ENCODE measurements at regions of chr10 and their contacts with region 1.

Region 1: GRCh38 chr10:62528441-62528840 is 154.3 kb downstream of the ZNF365 start:
- DNase-seq: peak; percentile 79
- ATAC-seq: peak; percentile 91
- H3K4me3 ChIP-seq: no peak overlapping the region
- H3K27ac ChIP-seq: peak overlapping the region; percentile 91
- H3K4me1 ChIP-seq: peaks cover 32% of the 10 kb centered on the region
- H3K27me3 ChIP-seq: no peaks in the 10 kb centered on the region
- CTCF ChIP-seq: no peak
- EP300 ChIP-seq: peak; percentile 81 to 89
- POLR2A ChIP-seq: no peak
- RAD21 ChIP-seq: peak; percentile 23; the same call in 1 of the 2 replicates

Region 2: DNA sequence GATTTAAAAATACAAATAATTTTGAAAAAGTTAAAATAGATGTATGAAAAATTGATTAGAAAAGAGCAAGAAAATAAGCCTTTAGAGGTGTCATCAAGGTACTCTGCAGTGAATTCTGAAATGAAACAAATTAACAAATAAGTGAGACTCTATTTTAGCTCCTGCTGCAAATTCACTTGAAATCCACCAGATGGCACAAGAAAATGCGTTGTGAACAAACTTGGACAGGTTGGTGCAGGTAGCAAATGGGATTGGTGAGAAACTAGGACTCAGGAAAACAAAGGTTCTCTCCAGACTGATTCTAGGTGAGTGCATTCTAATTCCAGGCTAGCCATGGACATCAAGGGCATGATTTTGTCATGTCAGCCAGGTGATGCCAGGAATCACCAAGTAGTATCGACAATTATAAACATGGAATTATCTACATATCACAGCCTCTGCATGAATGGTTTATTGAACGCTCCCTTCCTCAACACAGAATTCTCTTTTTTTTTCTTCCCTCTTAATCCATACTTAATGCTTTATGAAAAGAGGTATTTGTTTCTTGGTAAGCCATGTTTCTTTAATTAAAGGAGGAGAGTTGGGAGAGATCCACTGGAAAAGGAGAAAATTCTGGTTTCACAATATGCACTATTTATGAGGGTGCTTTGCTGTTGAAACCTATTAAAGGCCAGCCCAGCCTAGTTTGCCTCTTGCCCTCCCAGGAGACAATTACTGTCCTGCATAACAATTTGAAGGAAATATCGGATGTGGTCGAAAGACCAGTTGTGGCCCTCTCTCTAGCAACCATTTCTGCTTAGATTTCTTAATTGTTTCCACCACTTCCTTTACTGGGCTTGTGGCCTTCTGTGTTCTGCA is 36.2 kb before region 1 on chr10:
- CTCF ChIA-PET with region 1: interaction called, 7 read pairs
- POLR2A ChIA-PET with region 1: no interaction called
- RAD21 ChIA-PET with region 1: interaction called, 44 read pairs
- SMC1A ChIA-PET with region 1: interaction called, 33 read pairs
- in situ Hi-C with region 1: no loop called
- intact Hi-C with region 1: loop called (anchors 1 kb)
- DNase-seq: peak; percentile 25
- ATAC-seq: peak; percentile 75
- H3K4me3 ChIP-seq: no peak overlapping the region
- H3K27ac ChIP-seq: no peak overlapping the region
- H3K4me1 ChIP-seq: no peaks in the 10 kb centered on the region
- H3K27me3 ChIP-seq: no peaks in the 10 kb centered on the region; a peak in 1 of 4 replicates
- CTCF ChIP-seq: peak; percentile 56 to 71 (median 71); a peak in 5 of 6 replicates
- EP300 ChIP-seq: no peak
- POLR2A ChIP-seq: no peak
- RAD21 ChIP-seq: peak; percentile 94

Region 3: DNA sequence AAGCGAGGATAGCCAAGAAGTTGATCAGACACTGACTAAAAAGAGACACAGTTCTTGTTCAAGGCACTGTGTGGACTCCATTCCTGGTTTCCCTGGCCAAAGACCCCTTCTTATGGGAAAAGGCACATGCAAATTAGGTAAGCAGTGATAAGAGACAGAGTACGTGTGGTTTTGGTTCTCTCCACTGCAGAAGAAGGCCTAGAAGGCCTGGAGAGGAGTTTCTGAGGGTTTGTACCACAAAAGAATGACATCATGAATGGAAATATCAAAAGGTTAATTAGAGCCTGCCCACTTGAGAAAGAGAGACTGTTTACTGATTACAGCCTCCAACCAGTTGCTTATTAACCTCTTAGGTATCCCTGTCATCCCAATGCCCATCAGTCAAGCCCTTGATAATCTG is 16.8 kb before region 1 on chr10:
- CTCF ChIA-PET with region 1: interaction called, 7 read pairs
- POLR2A ChIA-PET with region 1: interaction called, 5 read pairs
- RAD21 ChIA-PET with region 1: interaction called, 12 read pairs
- SMC1A ChIA-PET with region 1: interaction called, 22 read pairs
- in situ Hi-C with region 1: no loop called
- intact Hi-C with region 1: loop called (anchors 1 kb)
- DNase-seq: peak; percentile 23
- ATAC-seq: peak; percentile 95
- H3K4me3 ChIP-seq: no peak overlapping the region
- H3K27ac ChIP-seq: no peak overlapping the region
- H3K4me1 ChIP-seq: no peaks in the 10 kb centered on the region
- H3K27me3 ChIP-seq: no peaks in the 10 kb centered on the region
- CTCF ChIP-seq: no peak
- EP300 ChIP-seq: peak; percentile 31 to 56; a peak in 2 of 4 replicates
- POLR2A ChIP-seq: no peak
- RAD21 ChIP-seq: no peak

Region 4: DNA sequence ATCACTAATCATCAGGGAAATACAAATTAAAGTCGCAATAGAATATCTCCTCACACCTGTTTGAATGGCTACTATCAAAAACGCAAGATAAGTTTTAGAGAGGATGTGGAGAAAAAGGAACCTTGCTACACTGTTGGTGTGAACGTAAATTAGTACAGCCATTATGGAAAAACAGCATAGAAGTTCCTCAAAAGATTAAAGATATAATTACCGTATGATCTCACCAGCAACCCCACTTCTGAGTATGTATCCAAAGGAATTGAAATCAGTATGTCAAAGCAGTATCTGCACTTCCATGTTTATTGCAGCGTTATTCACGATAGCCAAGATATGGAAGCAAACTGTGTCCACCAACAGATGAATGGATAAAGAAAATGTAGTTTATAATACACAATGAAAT is 10.2 kb after region 1 on chr10:
- CTCF ChIA-PET with region 1: interaction called, 6 read pairs
- POLR2A ChIA-PET with region 1: interaction called, 7 read pairs
- RAD21 ChIA-PET with region 1: interaction called, 30 read pairs
- SMC1A ChIA-PET with region 1: interaction called, 72 read pairs
- in situ Hi-C with region 1: no loop called
- intact Hi-C with region 1: no loop called
- DNase-seq: no peak
- ATAC-seq: no peak
- H3K4me3 ChIP-seq: no peak overlapping the region
- H3K27ac ChIP-seq: no peak overlapping the region
- H3K4me1 ChIP-seq: peaks cover 10% of the 10 kb centered on the region; the same call in 1 of the 2 replicates
- H3K27me3 ChIP-seq: no peaks in the 10 kb centered on the region
- CTCF ChIP-seq: no peak
- EP300 ChIP-seq: no peak
- POLR2A ChIP-seq: no peak
- RAD21 ChIP-seq: no peak

Region 5: DNA sequence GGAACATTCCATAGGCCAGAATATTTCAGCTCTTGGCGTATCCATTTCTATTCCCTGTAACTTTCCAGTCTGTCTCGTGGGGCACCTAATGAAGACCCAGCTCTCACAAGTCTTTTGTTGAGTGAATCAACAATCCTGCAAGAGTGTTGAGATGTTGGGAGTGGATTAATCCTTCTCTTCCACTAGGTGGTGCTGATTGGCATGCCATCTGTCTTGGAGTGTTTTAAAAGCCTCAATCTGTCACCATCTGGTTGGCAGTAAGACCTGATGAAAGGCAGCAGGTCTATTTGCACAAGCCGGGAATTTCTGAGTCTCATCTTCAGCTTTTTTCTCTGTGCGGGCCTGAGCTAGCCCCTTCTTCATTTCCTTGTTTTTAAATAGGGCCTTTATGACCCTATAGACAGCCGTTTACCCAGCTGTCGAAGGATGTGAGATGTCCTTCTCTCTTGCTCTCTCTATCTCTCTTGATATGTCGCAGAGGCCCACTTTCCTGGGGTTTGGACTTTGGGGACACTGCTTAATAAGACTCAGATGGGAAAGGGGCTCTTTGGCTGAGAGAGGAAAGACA is 26.3 kb after region 1 on chr10:
- CTCF ChIA-PET with region 1: interaction called, 26 read pairs
- POLR2A ChIA-PET with region 1: no interaction called
- RAD21 ChIA-PET with region 1: interaction called, 8 read pairs
- SMC1A ChIA-PET with region 1: interaction called, 15 read pairs
- in situ Hi-C with region 1: no loop called
- intact Hi-C with region 1: loop called (anchors 2 kb)
- DNase-seq: no peak
- ATAC-seq: peak; percentile 93
- H3K4me3 ChIP-seq: no peak overlapping the region
- H3K27ac ChIP-seq: no peak overlapping the region
- H3K4me1 ChIP-seq: no peaks in the 10 kb centered on the region
- H3K27me3 ChIP-seq: peaks cover 2 to 4% of the 10 kb centered on the region in 2 experiments; a peak in 2 of 4 replicates
- CTCF ChIP-seq: peak; percentile 63 to 68 (median 63); a peak in 5 of 6 replicates
- EP300 ChIP-seq: no peak
- POLR2A ChIP-seq: no peak
- RAD21 ChIP-seq: peak; percentile 85

Region 6: DNA sequence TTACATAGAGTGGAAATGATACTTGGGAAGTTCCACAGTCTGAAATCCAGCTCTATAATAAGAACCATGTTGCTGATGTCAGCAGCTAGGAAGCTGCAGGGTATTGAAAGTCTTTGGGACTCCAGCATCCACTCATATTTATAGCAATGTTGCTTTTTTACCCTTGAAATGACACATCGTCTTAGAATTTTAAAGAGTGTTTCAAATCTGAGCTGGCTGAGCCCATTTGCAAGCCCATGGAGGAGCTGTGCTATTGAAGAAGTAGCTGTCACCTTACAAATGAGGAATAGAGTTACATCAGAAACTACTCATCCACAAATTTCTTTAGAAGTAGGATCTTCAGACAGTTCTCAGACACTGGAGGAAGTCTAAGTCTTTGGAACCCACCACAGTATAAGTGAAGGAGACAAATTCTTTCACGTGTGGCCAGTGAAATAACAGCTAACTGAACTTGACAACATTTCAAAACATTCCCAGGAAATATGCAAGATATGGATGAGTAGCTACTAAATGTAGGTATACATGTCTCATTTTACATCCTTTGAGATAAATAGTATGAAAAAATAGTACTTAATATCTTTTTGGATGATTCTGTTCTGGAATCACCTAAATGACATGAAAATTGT is 49.3 kb after region 1 on chr10:
- CTCF ChIA-PET with region 1: no interaction called
- POLR2A ChIA-PET with region 1: interaction called, 6 read pairs
- RAD21 ChIA-PET with region 1: interaction called, 10 read pairs
- SMC1A ChIA-PET with region 1: interaction called, 6 read pairs
- in situ Hi-C with region 1: no loop called
- intact Hi-C with region 1: no loop called
- DNase-seq: no peak
- ATAC-seq: no peak
- H3K4me3 ChIP-seq: no peak overlapping the region
- H3K27ac ChIP-seq: no peak overlapping the region
- H3K4me1 ChIP-seq: no peaks in the 10 kb centered on the region
- H3K27me3 ChIP-seq: peaks cover 0 to 2% of the 10 kb centered on the region in 2 experiments; a peak in 2 of 4 replicates
- CTCF ChIP-seq: no peak
- EP300 ChIP-seq: no peak
- POLR2A ChIP-seq: no peak
- RAD21 ChIP-seq: no peak

Measured in GM12878 (cell line).